ENCODE measurements at regions of chr1 and their contacts with region 1.

Region 1: DNA sequence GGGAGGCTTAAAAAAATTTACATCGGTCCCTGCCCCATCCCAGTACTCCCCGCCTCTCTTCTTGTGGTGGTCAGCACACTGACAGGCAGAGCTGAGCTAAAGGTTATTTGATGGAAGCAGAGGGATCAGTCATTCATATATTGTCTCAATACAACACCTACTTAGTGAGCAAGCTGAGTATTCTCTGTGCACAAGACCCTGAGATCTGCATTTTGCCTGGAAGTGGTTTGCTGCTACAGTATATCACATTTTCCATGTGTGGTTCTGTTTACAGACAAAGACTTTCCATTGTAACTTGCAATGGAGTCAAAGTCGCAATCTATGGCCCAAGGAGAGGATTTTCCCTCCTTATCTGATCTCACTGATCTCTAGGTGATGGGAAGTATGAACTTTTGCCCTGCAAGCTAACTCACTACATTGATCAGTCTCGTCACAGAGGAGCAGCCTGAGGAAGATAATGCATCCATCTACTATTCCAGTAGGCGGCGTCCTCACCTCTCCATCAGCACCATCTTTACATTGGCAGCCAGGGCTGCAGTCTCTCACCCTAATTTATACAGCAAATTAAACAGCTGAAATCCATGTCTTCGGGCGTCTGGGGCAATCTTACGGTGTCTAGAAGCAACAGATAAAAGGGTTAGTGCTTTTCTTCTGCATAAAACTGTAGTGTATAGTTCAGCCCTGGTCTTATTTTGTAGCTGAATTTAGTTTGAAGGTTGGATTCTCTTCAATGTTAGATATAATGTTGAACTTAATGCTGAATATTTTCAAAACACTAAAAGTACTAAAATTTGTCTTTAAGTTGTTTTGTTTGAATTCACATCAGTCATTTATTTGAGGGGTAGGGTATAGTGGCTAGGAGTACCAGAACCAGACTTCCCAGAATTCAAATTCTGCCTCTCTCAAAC is 3.2 kb upstream of the TRAF5 start:
- DNase-seq: peak; percentile 71 to 76
- H3K4me3 ChIP-seq: no peak overlapping the region
- H3K4me1 ChIP-seq: peaks cover 13% of the 10 kb centered on the region
- H3K27me3 ChIP-seq: no peaks in the 10 kb centered on the region

Region 2: GRCh38 chr1:211476200-211476849 is 152.9 kb after region 1 on chr1:
- in situ Hi-C with region 1: loop called (anchors 10 kb)
- DNase-seq: peak; percentile 44 to 86
- H3K4me3 ChIP-seq: no peak overlapping the region
- H3K4me1 ChIP-seq: peaks cover 4% of the 10 kb centered on the region; the same call in 1 of the 2 replicates
- H3K27me3 ChIP-seq: peaks cover 4% of the 10 kb centered on the region; the same call in 1 of the 2 replicates

Region 3: DNA sequence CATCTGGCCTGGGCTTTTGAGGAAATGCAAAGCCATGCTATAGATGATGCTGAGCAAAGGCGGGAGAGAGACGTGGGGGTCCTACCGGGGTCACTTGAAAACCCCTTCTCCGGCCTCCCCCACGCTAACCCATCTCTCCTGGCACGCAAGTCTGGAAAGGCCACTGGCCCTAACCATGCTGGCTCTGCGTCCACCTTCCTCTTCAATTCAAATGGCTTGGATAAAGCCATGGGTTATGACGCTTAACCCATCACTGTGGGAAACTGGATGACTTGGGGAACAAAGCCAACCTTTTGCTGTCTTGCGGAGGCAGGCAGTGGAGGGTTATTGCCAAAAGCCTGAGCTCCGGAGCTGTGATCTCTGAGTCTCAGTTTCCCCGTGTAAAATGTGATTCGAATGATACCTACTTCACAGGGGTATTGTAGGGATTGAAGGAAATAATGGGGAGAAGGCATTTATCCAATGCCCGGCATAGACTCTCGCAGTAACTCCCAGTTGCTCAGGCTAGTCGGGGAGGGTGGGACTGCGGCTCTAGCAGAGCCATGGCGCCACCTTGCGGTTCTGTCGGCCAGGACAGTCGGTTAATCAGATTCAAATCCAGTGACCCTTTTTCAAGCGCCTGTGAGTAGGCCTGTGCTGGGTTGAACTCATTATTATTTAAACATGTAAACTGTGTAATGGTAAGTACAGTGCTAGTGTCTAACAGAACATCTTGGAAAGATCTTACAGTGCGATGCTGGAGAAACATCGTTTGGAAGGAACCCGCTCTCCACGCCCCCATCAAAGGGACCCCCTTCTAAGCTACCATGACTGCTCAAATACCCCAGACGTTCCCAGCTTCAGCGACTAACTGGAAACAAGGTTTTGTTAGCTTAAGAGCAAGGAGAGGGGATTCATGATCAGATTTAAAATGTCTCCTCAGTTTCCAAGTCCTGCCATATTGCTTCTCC is 331.7 kb after region 1 on chr1:
- in situ Hi-C with region 1: loop called (anchors 5 kb)
- DNase-seq: peak; percentile 80 to 93
- H3K4me3 ChIP-seq: no peak overlapping the region
- H3K4me1 ChIP-seq: no peaks in the 10 kb centered on the region
- H3K27me3 ChIP-seq: no peaks in the 10 kb centered on the region

Region 4: DNA sequence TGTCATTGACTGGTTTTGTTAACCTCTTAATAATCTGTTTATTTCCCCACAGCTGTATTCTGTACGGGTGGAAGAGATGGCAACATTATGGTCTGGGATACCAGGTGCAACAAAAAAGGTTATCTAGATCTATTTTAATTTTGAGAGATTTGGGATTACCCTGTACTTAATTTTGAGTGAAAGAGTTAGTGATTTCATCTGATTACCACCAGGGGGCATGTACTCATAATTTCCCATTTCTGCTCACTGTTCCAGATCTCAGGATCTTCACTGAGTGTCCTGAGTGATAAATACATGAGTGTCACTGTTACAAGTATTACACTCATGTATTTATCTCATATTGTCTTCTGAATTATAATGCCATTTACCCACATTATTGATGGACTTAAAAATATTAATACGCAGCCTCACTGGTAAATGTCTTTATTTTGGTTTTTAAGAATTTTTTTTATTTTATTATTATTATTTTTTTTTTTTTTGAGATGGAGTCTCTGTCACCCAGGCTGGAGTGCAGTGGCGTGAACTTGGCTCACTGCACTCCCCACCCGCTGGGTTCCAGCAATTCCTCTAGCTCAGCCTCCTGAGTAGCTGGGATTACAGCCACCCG is 739.5 kb after region 1 on chr1:
- in situ Hi-C with region 1: no loop called
- DNase-seq: peak in 1 of 2 experiments; percentile 53
- H3K4me3 ChIP-seq: no peak overlapping the region
- H3K4me1 ChIP-seq: no peaks in the 10 kb centered on the region
- H3K27me3 ChIP-seq: no peaks in the 10 kb centered on the region

Measured in HAP-1 (cell line).